ENCODE measurements at regions of chr5 and their contacts with region 1.

Region 1: GRCh38 chr5:173866243-173866857 is 21.8 kb upstream of the CPEB4 start:
- DNase-seq: peak in 2 of 4 experiments; percentile 63 to 65
- ATAC-seq: peak; percentile 78
- H3K4me3 ChIP-seq: peak overlapping the region; percentile 35
- H3K27ac ChIP-seq: peak overlapping the region; percentile 82
- H3K4me1 ChIP-seq: peaks cover 32 to 64% of the 10 kb centered on the region in 2 experiments
- H3K27me3 ChIP-seq: no peaks in the 10 kb centered on the region
- CTCF ChIP-seq: no peak
- EP300 ChIP-seq: no peak
- POLR2A ChIP-seq: no peak
- RAD21 ChIP-seq: no peak

Region 2: DNA sequence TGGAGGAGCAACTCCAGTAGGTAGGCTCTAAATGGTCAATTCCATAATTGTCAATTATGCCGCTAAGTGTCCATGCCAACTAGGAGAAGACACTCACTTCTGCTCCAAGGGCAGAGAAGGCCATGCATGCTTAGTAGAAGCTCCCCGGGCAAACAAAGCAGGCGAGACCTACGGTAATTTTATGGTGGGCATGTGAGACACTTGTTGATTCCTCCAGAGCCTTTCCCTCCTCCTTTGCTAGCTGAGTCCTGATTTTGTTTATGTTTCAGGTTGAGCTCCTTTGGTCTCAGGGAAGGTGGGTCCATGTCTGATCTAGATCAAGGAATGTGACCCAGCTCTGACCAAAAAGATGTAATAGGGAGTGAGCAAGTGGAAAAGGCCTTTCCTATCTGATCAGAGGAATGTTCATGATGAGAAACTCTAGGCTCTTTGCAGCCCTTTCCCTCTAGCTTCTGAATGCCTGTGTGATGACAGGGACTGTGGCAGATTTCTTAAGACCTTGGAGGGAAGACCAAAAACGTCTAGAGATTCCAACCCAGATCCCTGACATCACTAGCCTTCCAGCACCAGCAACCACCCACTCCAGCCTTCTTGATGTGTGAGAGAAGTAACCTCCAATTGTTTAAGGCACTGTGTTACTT is 14.1 kb after region 1 on chr5:
- CTCF ChIA-PET with region 1: no interaction called
- POLR2A ChIA-PET with region 1: interaction called, 11 read pairs
- in situ Hi-C with region 1: no loop called
- intact Hi-C with region 1: loop called (anchors 2 kb)
- DNase-seq: no peak
- ATAC-seq: no peak
- H3K4me3 ChIP-seq: no peak overlapping the region
- H3K27ac ChIP-seq: no peak overlapping the region
- H3K4me1 ChIP-seq: peaks cover 17 to 52% of the 10 kb centered on the region in 2 experiments; a peak in 4 of 5 replicates
- H3K27me3 ChIP-seq: no peaks in the 10 kb centered on the region
- CTCF ChIP-seq: no peak
- EP300 ChIP-seq: no peak
- POLR2A ChIP-seq: no peak
- RAD21 ChIP-seq: no peak

Region 3: DNA sequence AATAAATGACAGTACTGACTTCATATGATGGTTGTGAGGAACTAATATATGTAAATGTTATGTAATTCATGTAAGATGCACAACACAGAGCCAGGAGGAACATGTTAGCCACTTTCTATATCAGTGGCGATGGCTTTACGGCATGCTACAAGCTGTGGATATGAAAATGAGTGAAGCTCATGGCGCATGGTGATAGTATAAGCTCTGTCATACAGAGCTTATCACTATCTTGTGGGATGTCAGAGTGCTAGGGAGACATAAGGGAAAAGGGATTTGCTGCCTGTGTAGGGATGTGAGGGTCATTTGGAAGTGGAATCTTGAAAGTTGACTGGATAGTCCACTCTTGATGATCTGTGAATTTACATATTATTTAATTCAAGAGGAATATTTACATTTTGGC is 35.4 kb after region 1 on chr5:
- CTCF ChIA-PET with region 1: no interaction called
- POLR2A ChIA-PET with region 1: no interaction called
- in situ Hi-C with region 1: no loop called
- intact Hi-C with region 1: no loop called
- DNase-seq: peak in 1 of 4 experiments; percentile 58
- ATAC-seq: peak; percentile 82
- H3K4me3 ChIP-seq: no peak overlapping the region
- H3K27ac ChIP-seq: peak overlapping the region; percentile 33; the same call in 2 of the 3 replicates
- H3K4me1 ChIP-seq: peaks cover 4 to 30% of the 10 kb centered on the region in 2 experiments; a peak in 4 of 5 replicates
- H3K27me3 ChIP-seq: no peaks in the 10 kb centered on the region
- CTCF ChIP-seq: no peak
- EP300 ChIP-seq: peak; percentile 13; the same call in 1 of the 2 replicates
- POLR2A ChIP-seq: peak; percentile 50
- RAD21 ChIP-seq: no peak

Measured in K562 (cell line).